ENCODE measurements at regions of chr9 and their contacts with region 1.

Region 1: GRCh38 chr9:70258692-70259511 is at the start of gene SMC5:
- DNase-seq: peak; percentile 81 to 94 (median 93)
- ATAC-seq: peak; percentile 95
- H3K4me3 ChIP-seq: peak within 1 kb of the TSS; percentile 96
- H3K4me3 Mint-ChIP-seq: peak within 1 kb of the TSS; percentile 87 to 95 (median 91)
- H3K27ac ChIP-seq: peak within 1 kb of the TSS; percentile 94
- H3K27ac Mint-ChIP-seq: peak within 1 kb of the TSS; percentile 93 to 99 (median 98)
- H3K4me1 ChIP-seq: peaks cover 24 to 34% of the 10 kb centered on the region in 2 donors
- H3K4me1 Mint-ChIP-seq: peaks cover 45 to 79% (median 69%) of the 10 kb centered on the region in 7 donors
- H3K27me3 ChIP-seq: no peaks in the 10 kb centered on the region
- H3K27me3 Mint-ChIP-seq: peaks cover 0 to 12% (median 0%) of the 10 kb centered on the region in 5 donors
- total RNA-seq, gene SMC5: 26.2 to 44.6 (median 36.1) TPM

Region 2: DNA sequence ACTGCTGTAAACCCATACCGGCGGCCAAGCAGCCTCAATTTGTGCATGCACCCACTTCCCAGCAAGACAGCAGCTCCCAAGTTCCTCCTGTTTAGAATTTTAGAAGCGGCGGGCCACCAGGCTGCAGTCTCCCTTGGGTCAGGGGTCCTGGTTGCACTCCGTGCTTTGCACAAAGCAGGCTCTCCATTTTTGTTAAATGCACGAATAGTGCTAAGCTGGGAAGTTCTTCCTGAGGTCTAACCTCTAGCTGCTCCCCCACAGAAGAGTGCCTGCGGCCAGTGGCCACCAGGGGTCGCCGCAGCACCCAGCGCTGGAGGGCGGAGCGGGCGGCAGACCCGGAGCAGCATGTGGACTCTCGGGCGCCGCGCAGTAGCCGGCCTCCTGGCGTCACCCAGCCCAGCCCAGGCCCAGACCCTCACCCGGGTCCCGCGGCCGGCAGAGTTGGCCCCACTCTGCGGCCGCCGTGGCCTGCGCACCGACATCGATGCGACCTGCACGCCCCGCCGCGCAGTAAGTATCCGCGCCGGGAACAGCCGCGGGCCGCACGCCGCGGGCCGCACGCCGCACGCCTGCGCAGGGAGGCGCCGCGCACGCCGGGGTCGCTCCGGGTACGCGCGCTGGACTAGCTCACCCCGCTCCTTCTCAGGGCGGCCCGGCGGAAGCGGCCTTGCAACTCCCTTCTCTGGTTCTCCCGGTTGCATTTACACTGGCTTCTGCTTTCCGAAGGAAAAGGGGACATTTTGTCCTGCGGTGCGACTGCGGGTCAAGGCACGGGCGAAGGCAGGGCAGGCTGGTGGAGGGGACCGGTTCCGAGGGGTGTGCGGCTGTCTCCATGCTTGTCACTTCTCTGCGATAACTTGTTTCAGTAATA is 1223.2 kb before region 1 on chr9 and contains the start of gene FXN:
- CTCF ChIA-PET with region 1: no interaction called
- POLR2A ChIA-PET with region 1: no interaction called
- intact Hi-C with region 1: loop called (anchors 5 to 10 kb)
- DNase-seq: peak; percentile 60 to 89 (median 81)
- ATAC-seq: peak; percentile 95
- H3K4me3 ChIP-seq: peak within 1 kb of the TSS; percentile 72
- H3K4me3 Mint-ChIP-seq: peak within 1 kb of the TSS; percentile 91 to 99 (median 97)
- H3K27ac ChIP-seq: peak within 1 kb of the TSS; percentile 73
- H3K27ac Mint-ChIP-seq: peak within 1 kb of the TSS; percentile 88 to 95 (median 91)
- H3K4me1 ChIP-seq: peaks cover 9 to 16% of the 10 kb centered on the region in 2 donors
- H3K4me1 Mint-ChIP-seq: peaks cover 14 to 73% (median 38%) of the 10 kb centered on the region in 7 donors
- H3K27me3 ChIP-seq: no peaks in the 10 kb centered on the region
- H3K27me3 Mint-ChIP-seq: no peaks in the 10 kb centered on the region
- total RNA-seq, gene FXN: 16.7 to 28.3 (median 19.1) TPM

Region 3: GRCh38 chr9:69759421-69760277 is 499.3 kb before region 1 on chr9 and contains the start of gene PTAR1:
- CTCF ChIA-PET with region 1: no interaction called
- POLR2A ChIA-PET with region 1: no interaction called
- intact Hi-C with region 1: loop called (anchors 1 kb)
- DNase-seq: peak; percentile 80 to 95 (median 89)
- ATAC-seq: peak; percentile 93
- H3K4me3 ChIP-seq: peak within 1 kb of the TSS; percentile 76
- H3K4me3 Mint-ChIP-seq: peak within 1 kb of the TSS; percentile 87 to 99 (median 96)
- H3K27ac ChIP-seq: peak within 1 kb of the TSS; percentile 93
- H3K27ac Mint-ChIP-seq: peak within 1 kb of the TSS; percentile 85 to 98 (median 94)
- H3K4me1 ChIP-seq: peaks cover 7 to 16% of the 10 kb centered on the region in 2 donors
- H3K4me1 Mint-ChIP-seq: peaks cover 14 to 51% (median 35%) of the 10 kb centered on the region in 7 donors
- H3K27me3 ChIP-seq: no peaks in the 10 kb centered on the region
- H3K27me3 Mint-ChIP-seq: no peaks in the 10 kb centered on the region
- total RNA-seq, gene PTAR1: 59.6 to 82.4 (median 65.7) TPM

Region 4: GRCh38 chr9:70297141-70297540 is 38.2 kb after region 1 on chr9:
- CTCF ChIA-PET with region 1: no interaction called
- POLR2A ChIA-PET with region 1: no interaction called
- intact Hi-C with region 1: loop called in 1 of 2 experiments (anchors 5 kb)
- DNase-seq: no peak
- ATAC-seq: no peak
- H3K4me3 ChIP-seq: no peak overlapping the region
- H3K4me3 Mint-ChIP-seq: no peak overlapping the region
- H3K27ac ChIP-seq: no peak overlapping the region
- H3K27ac Mint-ChIP-seq: no peak overlapping the region
- H3K4me1 ChIP-seq: no peaks in the 10 kb centered on the region
- H3K4me1 Mint-ChIP-seq: peaks cover 6 to 29% (median 12%) of the 10 kb centered on the region in 7 donors
- H3K27me3 ChIP-seq: no peaks in the 10 kb centered on the region
- H3K27me3 Mint-ChIP-seq: no peaks in the 10 kb centered on the region

Region 5: DNA sequence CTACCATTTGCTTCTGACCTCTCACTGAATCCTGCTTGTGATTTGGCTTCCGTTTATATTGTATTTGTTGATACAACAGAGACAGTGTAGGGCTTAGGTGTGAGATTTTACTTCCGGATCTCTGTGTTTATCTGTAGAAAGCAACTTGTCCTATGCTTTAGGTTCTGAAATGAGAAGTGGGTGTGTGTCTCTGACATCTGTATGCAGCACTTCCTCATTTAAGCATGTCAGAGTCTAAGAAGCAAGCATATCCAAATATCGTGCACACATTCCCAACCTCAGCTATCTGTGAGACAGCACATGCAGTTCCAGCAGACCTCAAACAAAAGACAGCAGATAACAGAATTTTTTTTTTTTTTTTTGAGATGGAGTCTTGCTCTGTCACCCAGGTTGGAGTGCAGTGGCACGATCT is 139.2 kb after region 1 on chr9:
- CTCF ChIA-PET with region 1: no interaction called
- POLR2A ChIA-PET with region 1: interaction called, 3 read pairs
- intact Hi-C with region 1: loop called in 1 of 2 experiments (anchors 5 kb)
- DNase-seq: peak in 6 of 9 donors; percentile 45 to 69 (median 56)
- ATAC-seq: peak; percentile 95
- H3K4me3 ChIP-seq: peak overlapping the region; percentile 3
- H3K4me3 Mint-ChIP-seq: peak overlapping the region; percentile 13 to 85 (median 74)
- H3K27ac ChIP-seq: peak overlapping the region; percentile 50
- H3K27ac Mint-ChIP-seq: peak overlapping the region; percentile 49 to 91 (median 84)
- H3K4me1 ChIP-seq: peaks cover 40 to 68% of the 10 kb centered on the region in 2 donors
- H3K4me1 Mint-ChIP-seq: peaks cover 50 to 88% (median 78%) of the 10 kb centered on the region in 7 donors
- H3K27me3 ChIP-seq: no peaks in the 10 kb centered on the region
- H3K27me3 Mint-ChIP-seq: no peaks in the 10 kb centered on the region

Region 6: DNA sequence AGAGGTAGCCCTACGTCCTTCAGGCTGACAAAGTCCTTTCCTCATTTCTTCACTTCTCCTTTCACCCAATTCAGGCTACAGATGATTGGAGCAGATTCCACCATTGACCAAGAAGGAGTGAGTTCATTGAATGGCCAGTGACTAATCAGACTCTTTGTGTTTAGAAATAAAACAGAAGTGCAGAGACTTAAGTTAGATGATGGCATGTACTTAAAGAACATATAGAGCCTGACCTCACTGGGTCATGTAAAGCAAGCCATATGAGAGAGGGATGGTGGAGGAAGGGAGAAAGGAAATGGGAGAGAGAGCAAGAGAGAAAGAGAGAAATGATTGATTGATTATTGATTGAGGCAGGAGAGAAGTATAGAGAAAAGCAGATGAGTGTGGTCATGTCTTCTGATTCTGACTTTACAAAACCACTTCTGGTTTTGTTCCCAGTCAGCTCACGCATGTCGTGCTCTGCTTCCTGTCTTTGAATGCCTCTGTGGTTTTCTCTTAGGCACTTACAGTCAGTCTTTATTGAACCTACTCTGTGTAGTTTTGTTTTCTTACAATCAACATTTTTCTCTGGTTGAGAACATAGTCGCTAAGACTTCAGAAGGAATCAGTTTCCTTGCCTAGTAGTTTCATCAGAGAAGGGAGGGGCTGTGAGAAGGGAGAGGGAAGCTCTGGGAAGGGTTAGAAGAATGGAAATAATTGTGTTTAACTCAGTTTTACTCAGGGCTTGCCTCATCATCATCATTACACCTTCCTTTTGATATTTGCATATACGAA is 304.7 kb after region 1 on chr9:
- CTCF ChIA-PET with region 1: no interaction called
- POLR2A ChIA-PET with region 1: interaction called, 3 read pairs
- intact Hi-C with region 1: loop called (anchors 2 to 5 kb)
- DNase-seq: peak in 8 of 9 donors; percentile 45 to 86 (median 78)
- ATAC-seq: peak; percentile 93
- H3K4me3 ChIP-seq: peak overlapping the region; percentile 15
- H3K4me3 Mint-ChIP-seq: peak overlapping the region; percentile 45 to 85 (median 68)
- H3K27ac ChIP-seq: peak overlapping the region; percentile 67
- H3K27ac Mint-ChIP-seq: peak overlapping the region; percentile 85 to 98 (median 95)
- H3K4me1 ChIP-seq: peaks cover 17 to 34% of the 10 kb centered on the region in 2 donors
- H3K4me1 Mint-ChIP-seq: peaks cover 33 to 66% (median 53%) of the 10 kb centered on the region in 7 donors
- H3K27me3 ChIP-seq: no peaks in the 10 kb centered on the region
- H3K27me3 Mint-ChIP-seq: no peaks in the 10 kb centered on the region

Region 7: GRCh38 chr9:71911253-71912074 is 1652.6 kb after region 1 on chr9 and contains the start of gene C9orf85:
- CTCF ChIA-PET with region 1: no interaction called
- POLR2A ChIA-PET with region 1: no interaction called
- intact Hi-C with region 1: loop called (anchors 2 kb)
- DNase-seq: peak; percentile 84 to 98 (median 95)
- ATAC-seq: peak; percentile 96
- H3K4me3 ChIP-seq: peak within 1 kb of the TSS; percentile 83
- H3K4me3 Mint-ChIP-seq: peak within 1 kb of the TSS; percentile 95 to 100 (median 100)
- H3K27ac ChIP-seq: peak within 1 kb of the TSS; percentile 74
- H3K27ac Mint-ChIP-seq: peak within 1 kb of the TSS; percentile 90 to 99 (median 95)
- H3K4me1 ChIP-seq: peaks cover 15 to 22% of the 10 kb centered on the region in 2 donors
- H3K4me1 Mint-ChIP-seq: peaks cover 47 to 80% (median 67%) of the 10 kb centered on the region in 7 donors
- H3K27me3 ChIP-seq: peaks cover 0 to 3% of the 10 kb centered on the region in 2 donors
- H3K27me3 Mint-ChIP-seq: no peaks in the 10 kb centered on the region
- total RNA-seq, gene C9orf85: 4.8 to 10.3 (median 8.6) TPM